ENCODE measurements at regions of chr2 and their contacts with region 1.

Region 1: GRCh38 chr2:229133155-229133772 is 137.8 kb downstream of the PID1 start:
- DNase-seq: no peak
- ATAC-seq: peak in 2 of 4 donors; percentile 56 to 61
- H3K4me3 ChIP-seq: no peak overlapping the region
- H3K27ac ChIP-seq: no peak overlapping the region
- H3K4me1 ChIP-seq: peaks cover 0 to 12% (median 0%) of the 10 kb centered on the region in 12 donors
- H3K27me3 ChIP-seq: no peaks in the 10 kb centered on the region
- CTCF ChIP-seq: peak; percentile 21 to 57 (median 47)
- POLR2A ChIP-seq: no peak

Region 2: GRCh38 chr2:228681426-228681825 is 451.8 kb before region 1 on chr2:
- intact Hi-C with region 1: loop called in 1 of 10 experiments (anchors 10 kb)
- DNase-seq: no peak
- ATAC-seq: peak in 3 of 4 donors; percentile 15 to 69 (median 44)
- H3K4me3 ChIP-seq: no peak overlapping the region
- H3K27ac ChIP-seq: no peak overlapping the region
- H3K4me1 ChIP-seq: peaks cover 0 to 5% (median 0%) of the 10 kb centered on the region in 12 donors
- H3K27me3 ChIP-seq: no peaks in the 10 kb centered on the region
- CTCF ChIP-seq: peak in 11 of 12 donors; percentile 3 to 58 (median 47)
- POLR2A ChIP-seq: no peak

Region 3: DNA sequence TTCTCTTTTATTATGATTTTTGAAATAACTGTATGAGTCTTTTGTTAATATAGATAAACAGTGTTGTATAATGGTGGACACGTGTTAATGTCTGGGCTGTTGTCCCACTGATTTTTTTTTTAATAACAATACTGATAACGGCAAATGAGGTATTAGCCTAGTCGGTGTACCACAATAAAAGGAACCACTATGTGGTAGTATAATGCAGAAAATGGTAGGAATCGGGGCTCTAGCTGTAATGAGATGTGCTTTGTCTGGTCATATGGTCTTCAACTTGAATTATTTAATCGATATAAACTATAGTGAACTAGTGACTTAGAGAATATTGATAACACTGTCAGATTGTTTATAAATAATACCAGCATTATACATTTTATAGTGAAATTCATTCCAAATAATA is 433.9 kb before region 1 on chr2:
- intact Hi-C with region 1: loop called in 2 of 10 experiments (anchors 10 kb)
- DNase-seq: no peak
- ATAC-seq: peak; percentile 37 to 81 (median 58)
- H3K4me3 ChIP-seq: no peak overlapping the region
- H3K27ac ChIP-seq: no peak overlapping the region
- H3K4me1 ChIP-seq: no peaks in the 10 kb centered on the region
- H3K27me3 ChIP-seq: no peaks in the 10 kb centered on the region
- CTCF ChIP-seq: peak in 10 of 12 donors; percentile 16 to 54 (median 38)
- POLR2A ChIP-seq: no peak

Region 4: GRCh38 chr2:229342376-229342775 is 209.1 kb after region 1 on chr2:
- intact Hi-C with region 1: no loop called
- DNase-seq: peak in 3 of 5 donors; percentile 21 to 69 (median 43)
- ATAC-seq: no peak
- H3K4me3 ChIP-seq: no peak overlapping the region
- H3K27ac ChIP-seq: no peak overlapping the region
- H3K4me1 ChIP-seq: peaks cover 0 to 5% (median 0%) of the 10 kb centered on the region in 12 donors
- H3K27me3 ChIP-seq: peaks cover 0 to 5% (median 0%) of the 10 kb centered on the region in 9 donors
- CTCF ChIP-seq: peak; percentile 7 to 46 (median 32)
- POLR2A ChIP-seq: no peak

Measured in heart left ventricle (tissue), 16 donors.